WTC11 (cell line): ENCODE measurements at regions of chr12 and their contacts with region 1.

Region 1: GRCh38 chr12:102948941-102949352 is 8.5 kb upstream of the ASCL1 start:
- DNase-seq: peak; percentile 81
- ATAC-seq: peak; percentile 30
- H3K4me3 Mint-ChIP-seq: no peak overlapping the region
- H3K27ac Mint-ChIP-seq: no peak overlapping the region
- H3K4me1 Mint-ChIP-seq: peaks cover 21% of the 10 kb centered on the region
- H3K27me3 Mint-ChIP-seq: peaks cover 76% of the 10 kb centered on the region
- CTCF ChIP-seq: peak; percentile 96

Region 2: GRCh38 chr12:102573237-102573636 is 375.7 kb before region 1 on chr12:
- CTCF ChIA-PET with region 1: no interaction called
- POLR2A ChIA-PET with region 1: no interaction called
- DNase-seq: no peak
- ATAC-seq: no peak
- H3K4me3 Mint-ChIP-seq: no peak overlapping the region
- H3K27ac Mint-ChIP-seq: no peak overlapping the region
- H3K4me1 Mint-ChIP-seq: no peaks in the 10 kb centered on the region
- H3K27me3 Mint-ChIP-seq: no peaks in the 10 kb centered on the region
- CTCF ChIP-seq: no peak

Region 3: DNA sequence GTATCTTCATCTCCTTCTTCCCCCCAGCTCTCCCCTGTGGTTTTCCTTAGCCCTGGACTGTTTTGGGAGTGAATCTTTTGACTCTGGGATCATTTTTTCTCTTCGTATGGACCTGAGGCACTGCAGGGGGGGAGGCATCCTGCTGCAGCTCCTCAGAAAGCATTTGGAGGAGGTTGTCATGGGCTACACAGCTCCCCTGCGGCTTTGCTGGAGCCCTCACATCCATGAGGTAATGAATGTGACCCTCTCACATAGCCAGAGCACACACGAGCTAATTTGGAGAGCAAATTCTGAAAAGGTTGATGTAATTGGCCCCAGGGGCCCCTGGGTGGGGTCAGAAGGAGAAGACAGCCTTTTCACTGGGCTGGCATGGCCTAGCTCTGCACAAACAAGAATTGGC is 142.8 kb before region 1 on chr12:
- CTCF ChIA-PET with region 1: no interaction called
- POLR2A ChIA-PET with region 1: no interaction called
- DNase-seq: no peak
- ATAC-seq: no peak
- H3K4me3 Mint-ChIP-seq: no peak overlapping the region
- H3K27ac Mint-ChIP-seq: no peak overlapping the region
- H3K4me1 Mint-ChIP-seq: peaks cover 7% of the 10 kb centered on the region
- H3K27me3 Mint-ChIP-seq: no peaks in the 10 kb centered on the region; the same call in 1 of the 2 replicates
- CTCF ChIP-seq: no peak

Region 4: GRCh38 chr12:102964872-102965271 is 15.9 kb after region 1 on chr12:
- CTCF ChIA-PET with region 1: interaction called, 34 read pairs
- POLR2A ChIA-PET with region 1: interaction called, 4 read pairs
- DNase-seq: peak; percentile 70
- ATAC-seq: peak; percentile 15
- H3K4me3 Mint-ChIP-seq: peak overlapping the region; percentile 79
- H3K27ac Mint-ChIP-seq: no peak overlapping the region
- H3K4me1 Mint-ChIP-seq: peaks cover 58% of the 10 kb centered on the region
- H3K27me3 Mint-ChIP-seq: peaks cover 96% of the 10 kb centered on the region
- CTCF ChIP-seq: no peak

Region 5: DNA sequence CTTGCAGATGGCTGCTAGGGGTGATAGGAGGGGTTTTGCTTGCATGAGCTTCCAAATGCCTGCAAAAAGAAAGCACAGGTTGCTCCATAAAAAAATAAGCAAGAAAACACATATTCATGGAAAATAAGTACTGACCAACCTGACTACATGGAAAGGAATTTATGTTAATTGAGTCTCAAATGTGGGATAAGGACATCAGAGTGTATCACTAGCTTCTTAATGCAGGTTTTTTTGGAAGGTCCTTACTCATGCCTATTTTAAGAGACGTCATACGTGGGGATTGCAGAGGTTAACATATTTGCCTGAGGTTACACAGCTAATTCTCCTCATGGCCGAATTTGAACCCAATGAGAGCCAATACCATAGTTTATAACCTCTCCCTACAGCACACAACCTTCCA is 124.7 kb after region 1 on chr12:
- CTCF ChIA-PET with region 1: no interaction called
- POLR2A ChIA-PET with region 1: no interaction called
- DNase-seq: no peak
- ATAC-seq: no peak
- H3K4me3 Mint-ChIP-seq: no peak overlapping the region
- H3K27ac Mint-ChIP-seq: no peak overlapping the region
- H3K4me1 Mint-ChIP-seq: no peaks in the 10 kb centered on the region
- H3K27me3 Mint-ChIP-seq: no peaks in the 10 kb centered on the region
- CTCF ChIP-seq: no peak

Region 6: GRCh38 chr12:103548622-103549601 is 600.0 kb after region 1 on chr12:
- CTCF ChIA-PET with region 1: interaction called, 78 read pairs
- POLR2A ChIA-PET with region 1: no interaction called
- DNase-seq: peak; percentile 75
- ATAC-seq: peak; percentile 81
- H3K4me3 Mint-ChIP-seq: no peak overlapping the region
- H3K27ac Mint-ChIP-seq: no peak overlapping the region
- H3K4me1 Mint-ChIP-seq: 0 out of 2 replicates have a peak, but pooled peaks cover 4% of the 10 kb centered on the region
- H3K27me3 Mint-ChIP-seq: no peaks in the 10 kb centered on the region; the same call in 1 of the 2 replicates
- CTCF ChIP-seq: peak; percentile 85